ENCODE measurements at regions of chr17 and their contacts with region 1.

Region 1: DNA sequence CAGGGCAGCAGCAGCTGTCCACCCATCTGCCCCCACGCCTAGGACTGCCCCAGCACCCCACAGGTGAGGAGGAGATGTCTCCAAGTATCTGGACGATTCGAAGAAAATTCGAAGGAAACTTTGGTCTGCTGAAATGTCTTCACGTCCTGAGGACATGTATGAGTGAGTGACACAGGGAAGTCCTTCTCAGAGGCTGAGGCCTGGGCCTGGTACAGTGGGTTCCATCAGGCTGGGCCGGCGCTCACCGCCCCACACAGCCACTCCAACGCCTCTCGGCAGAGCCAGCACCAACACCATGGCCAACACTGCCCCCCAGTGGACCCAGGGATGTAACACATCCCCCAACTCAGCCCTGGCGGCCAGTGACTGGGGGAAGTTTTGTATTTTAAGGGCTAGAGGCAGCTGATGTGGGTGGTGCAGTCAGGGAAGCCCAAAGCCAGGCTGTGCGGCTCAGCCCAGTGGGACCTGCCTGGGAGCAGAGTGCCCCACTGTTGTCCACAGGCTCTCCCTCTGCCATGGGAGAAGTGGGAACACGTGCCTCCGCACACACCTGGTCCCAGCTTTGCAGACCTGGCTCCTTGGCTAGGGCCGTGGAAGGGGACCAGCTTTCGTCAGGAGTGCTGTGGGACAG is 55.8 kb upstream of the FASN start:
- DNase-seq: peak; percentile 83
- H3K27ac ChIP-seq: peak overlapping the region; percentile 49
- CTCF ChIP-seq: peak; percentile 91

Region 2: DNA sequence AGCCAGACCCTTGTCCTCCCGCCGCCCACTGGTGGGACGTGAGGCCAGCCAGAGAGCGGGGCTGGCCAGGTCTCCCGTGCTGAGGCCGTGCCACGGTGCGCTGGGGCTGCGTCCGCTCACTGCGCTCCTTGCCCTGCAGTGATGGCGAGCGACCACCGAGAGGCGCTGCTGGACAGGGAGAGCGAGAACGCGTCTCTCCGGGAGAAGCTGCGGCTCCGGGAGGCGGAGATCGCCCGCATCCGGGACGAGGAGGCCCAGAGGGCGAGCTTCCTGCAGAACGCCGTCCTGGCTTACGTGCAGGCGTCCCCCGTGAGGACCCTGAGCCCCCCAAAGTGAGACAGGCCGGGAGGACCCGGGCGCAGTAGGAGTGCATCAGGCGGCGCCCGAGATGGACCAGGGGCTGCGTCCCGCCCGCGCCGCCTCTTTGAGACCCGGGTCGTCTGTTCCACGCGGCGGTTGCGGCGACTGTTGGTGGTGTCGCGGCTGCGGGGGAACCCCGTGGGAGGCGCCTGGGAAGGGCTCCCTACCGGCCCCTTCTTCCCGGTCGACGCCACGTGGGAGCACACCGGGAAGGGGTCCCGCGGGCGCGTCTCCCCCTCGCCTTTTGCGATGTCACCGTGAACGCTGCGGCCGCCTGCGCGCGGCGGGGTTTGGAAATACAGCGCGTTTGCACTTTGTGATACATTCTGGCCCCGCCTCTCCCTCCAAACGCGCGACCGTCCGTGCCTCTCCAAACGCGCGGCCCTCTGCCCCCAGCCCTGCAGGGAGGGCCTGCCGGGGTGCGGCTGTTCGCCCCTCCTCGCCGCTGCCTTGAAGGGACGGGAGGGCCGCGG is 123.2 kb before region 1 on chr17:
- CTCF ChIA-PET with region 1: interaction called, 16 read pairs
- POLR2A ChIA-PET with region 1: no interaction called
- DNase-seq: peak; percentile 74
- H3K27ac ChIP-seq: peak overlapping the region; percentile 82
- CTCF ChIP-seq: peak; percentile 92